Caco-2 (cell line): ENCODE measurements at regions of chr5 and their contacts with region 1.

Region 1: DNA sequence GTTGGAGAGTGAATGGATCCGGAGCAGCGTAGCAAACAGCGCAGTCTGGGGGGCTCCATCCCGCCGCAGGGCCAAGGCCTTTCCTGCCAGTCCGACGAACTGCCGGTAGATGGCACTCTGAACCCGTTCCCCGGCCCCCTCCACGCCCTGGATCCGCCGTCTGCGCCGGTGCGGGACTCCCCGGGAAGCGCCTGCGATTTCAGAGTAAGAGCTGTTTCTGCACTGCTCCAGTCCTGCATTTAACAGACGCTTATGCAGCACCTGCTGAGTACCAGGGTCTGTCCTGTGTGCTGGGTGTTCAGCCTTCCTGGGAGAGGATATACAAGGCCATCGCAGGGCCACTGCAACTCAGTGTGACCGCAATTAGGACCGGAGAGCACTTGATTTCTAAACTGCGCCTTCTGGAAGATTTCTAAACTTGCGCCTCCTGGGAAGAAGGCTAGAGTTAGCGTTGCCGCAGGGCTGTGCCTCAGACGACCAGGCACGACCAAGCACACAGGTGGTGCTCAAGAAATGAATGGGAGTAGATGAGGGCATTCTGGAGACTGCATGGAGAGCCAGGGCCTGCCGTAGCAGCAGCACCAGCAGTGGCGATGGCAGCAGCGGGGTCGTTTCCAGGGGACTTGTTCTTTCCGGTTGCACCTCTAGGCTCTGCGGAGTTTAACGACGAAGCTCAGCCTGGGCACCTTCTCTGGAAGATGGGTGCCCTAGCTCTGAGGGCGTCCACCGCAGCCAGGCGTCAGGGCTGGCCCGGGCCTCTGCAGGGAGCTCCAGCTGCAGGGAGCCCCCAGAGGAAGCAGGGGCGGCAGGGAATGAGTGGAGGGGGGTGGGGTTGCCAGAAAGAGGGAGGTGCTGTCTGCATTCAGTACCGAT is 14.3 kb upstream of the TIFAB start:
- DNase-seq: peak; percentile 77 to 84
- H3K4me3 ChIP-seq: no peak overlapping the region
- H3K4me3 Mint-ChIP-seq: no peak overlapping the region
- H3K27ac Mint-ChIP-seq: no peak overlapping the region
- H3K4me1 ChIP-seq: no peaks in the 10 kb centered on the region; the same call in 1 of the 2 replicates
- H3K4me1 Mint-ChIP-seq: peaks cover 6% of the 10 kb centered on the region
- H3K27me3 ChIP-seq: peaks cover 1% of the 10 kb centered on the region
- H3K27me3 Mint-ChIP-seq: peaks cover 18% of the 10 kb centered on the region
- CTCF ChIP-seq: peak; percentile 91 to 97

Region 2: DNA sequence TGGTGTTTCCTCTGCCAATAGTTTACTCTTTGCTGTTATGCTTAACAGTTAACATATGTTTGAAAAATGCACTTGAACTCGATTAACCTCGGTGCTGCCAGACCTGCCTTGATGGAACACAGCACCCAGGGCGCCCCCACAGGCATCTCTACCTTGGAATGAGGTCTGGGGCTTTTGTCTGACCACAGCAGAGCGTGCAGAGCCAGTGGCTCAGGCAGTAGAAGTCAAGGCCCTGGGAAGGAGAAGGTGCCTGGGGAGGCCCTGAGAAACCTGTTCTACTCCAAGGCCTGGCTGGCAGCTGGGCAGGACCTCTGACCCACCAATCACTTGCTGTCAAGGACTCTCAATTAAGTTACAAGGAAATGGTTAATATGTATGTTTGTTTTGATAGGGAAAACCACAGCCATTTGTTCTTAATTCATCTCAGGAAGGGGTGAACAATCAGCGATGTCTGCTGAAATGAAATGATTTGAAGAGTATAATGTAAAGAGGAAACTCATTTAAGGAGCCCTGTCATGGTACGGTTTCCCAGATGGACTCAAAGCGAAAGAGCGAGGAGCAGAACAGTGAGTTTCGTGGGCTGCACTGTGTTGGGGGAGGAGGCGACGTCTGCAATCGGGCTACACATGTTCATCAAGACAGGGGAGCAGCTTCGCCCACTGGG is 89.3 kb before region 1 on chr5:
- CTCF ChIA-PET with region 1: no interaction called
- POLR2A ChIA-PET with region 1: no interaction called
- intact Hi-C with region 1: no loop called
- DNase-seq: no peak
- H3K4me3 ChIP-seq: no peak overlapping the region
- H3K4me3 Mint-ChIP-seq: no peak overlapping the region
- H3K27ac Mint-ChIP-seq: no peak overlapping the region
- H3K4me1 ChIP-seq: peaks cover 12% of the 10 kb centered on the region; the same call in 1 of the 2 replicates
- H3K4me1 Mint-ChIP-seq: no peaks in the 10 kb centered on the region
- H3K27me3 ChIP-seq: no peaks in the 10 kb centered on the region
- H3K27me3 Mint-ChIP-seq: no peaks in the 10 kb centered on the region
- CTCF ChIP-seq: no peak

Region 3: DNA sequence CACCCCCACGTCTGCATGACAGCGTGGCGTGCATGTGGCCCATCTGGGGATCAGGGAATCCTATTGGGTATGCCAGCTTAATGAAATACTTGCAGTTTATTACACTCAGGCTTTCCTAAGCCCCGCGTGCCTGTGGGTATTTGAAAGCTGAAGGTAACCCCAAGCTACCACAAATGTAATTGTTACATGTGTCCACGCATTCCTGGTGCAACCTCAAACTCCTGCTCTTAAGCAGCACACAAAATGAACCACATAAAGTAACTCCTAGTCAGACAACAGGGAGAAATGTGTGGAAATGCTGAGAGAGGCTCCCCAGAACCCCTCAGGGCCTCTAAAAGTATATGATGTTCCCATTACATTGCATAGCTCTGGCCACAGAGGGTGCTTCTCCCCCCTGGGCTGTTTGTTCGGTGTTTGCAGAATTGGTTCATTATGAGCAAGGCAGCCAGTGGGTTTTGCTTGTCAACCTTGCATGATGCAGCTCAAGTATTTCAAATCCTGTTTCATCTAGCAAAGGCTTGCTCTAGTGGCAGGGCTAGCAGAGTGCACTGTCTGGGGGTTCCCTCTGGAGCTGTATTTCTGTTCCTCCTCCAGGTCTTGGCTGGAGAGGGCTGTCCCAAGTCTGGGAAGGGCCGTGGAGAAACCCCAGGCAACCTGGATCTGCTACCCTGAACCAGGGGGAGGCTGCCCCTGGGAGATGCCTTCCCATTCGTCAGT is 17.5 kb before region 1 on chr5:
- CTCF ChIA-PET with region 1: interaction called, 13 read pairs
- POLR2A ChIA-PET with region 1: no interaction called
- intact Hi-C with region 1: no loop called
- DNase-seq: no peak
- H3K4me3 ChIP-seq: no peak overlapping the region
- H3K4me3 Mint-ChIP-seq: no peak overlapping the region
- H3K27ac Mint-ChIP-seq: no peak overlapping the region
- H3K4me1 ChIP-seq: no peaks in the 10 kb centered on the region
- H3K4me1 Mint-ChIP-seq: no peaks in the 10 kb centered on the region
- H3K27me3 ChIP-seq: no peaks in the 10 kb centered on the region
- H3K27me3 Mint-ChIP-seq: peaks cover 2% of the 10 kb centered on the region
- CTCF ChIP-seq: no peak

Region 4: GRCh38 chr5:135488727-135489465 is 22.5 kb after region 1 on chr5:
- CTCF ChIA-PET with region 1: interaction called, 18 read pairs
- POLR2A ChIA-PET with region 1: no interaction called
- intact Hi-C with region 1: no loop called
- DNase-seq: peak; percentile 83
- H3K4me3 ChIP-seq: peak overlapping the region; percentile 34
- H3K4me3 Mint-ChIP-seq: peak overlapping the region; percentile 72
- H3K27ac Mint-ChIP-seq: peak overlapping the region; percentile 67
- H3K4me1 ChIP-seq: peaks cover 44% of the 10 kb centered on the region
- H3K4me1 Mint-ChIP-seq: peaks cover 30% of the 10 kb centered on the region
- H3K27me3 ChIP-seq: no peaks in the 10 kb centered on the region
- H3K27me3 Mint-ChIP-seq: no peaks in the 10 kb centered on the region
- CTCF ChIP-seq: no peak

Region 5: GRCh38 chr5:135551593-135552447 is 85.4 kb after region 1 on chr5:
- CTCF ChIA-PET with region 1: interaction called, 311 read pairs
- POLR2A ChIA-PET with region 1: no interaction called
- intact Hi-C with region 1: loop called (anchors 1 kb)
- DNase-seq: peak; percentile 78 to 82
- H3K4me3 ChIP-seq: no peak overlapping the region
- H3K4me3 Mint-ChIP-seq: no peak overlapping the region
- H3K27ac Mint-ChIP-seq: no peak overlapping the region
- H3K4me1 ChIP-seq: no peaks in the 10 kb centered on the region
- H3K4me1 Mint-ChIP-seq: peaks cover 6% of the 10 kb centered on the region
- H3K27me3 ChIP-seq: no peaks in the 10 kb centered on the region
- H3K27me3 Mint-ChIP-seq: peaks cover 10% of the 10 kb centered on the region
- CTCF ChIP-seq: peak; percentile 80 to 82

Region 6: DNA sequence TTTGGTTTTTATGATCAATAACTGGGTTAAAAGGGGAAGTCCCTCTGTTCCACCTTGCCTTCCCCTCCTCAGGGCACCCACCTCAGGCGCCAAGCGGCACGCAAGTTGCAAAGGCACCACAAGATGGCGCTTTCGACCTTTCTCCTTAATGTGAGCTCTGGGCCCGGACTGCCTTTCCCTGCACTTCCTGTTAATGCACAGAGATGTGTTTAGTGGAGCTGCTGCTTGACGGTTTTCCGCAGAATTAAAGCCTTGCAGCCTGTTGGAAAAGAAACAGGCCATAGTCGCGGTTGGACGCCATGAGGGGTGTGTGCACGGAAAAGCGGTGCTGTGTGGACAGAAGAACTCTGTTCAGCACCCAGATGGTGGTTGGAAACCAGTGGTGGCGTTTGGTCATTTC is 94.4 kb after region 1 on chr5:
- CTCF ChIA-PET with region 1: interaction called, 55 read pairs
- POLR2A ChIA-PET with region 1: no interaction called
- intact Hi-C with region 1: loop called (anchors 1 kb)
- DNase-seq: peak; percentile 83 to 86
- H3K4me3 ChIP-seq: no peak overlapping the region
- H3K4me3 Mint-ChIP-seq: peak overlapping the region; percentile 27
- H3K27ac Mint-ChIP-seq: no peak overlapping the region
- H3K4me1 ChIP-seq: no peaks in the 10 kb centered on the region; the same call in 1 of the 2 replicates
- H3K4me1 Mint-ChIP-seq: peaks cover 12% of the 10 kb centered on the region
- H3K27me3 ChIP-seq: no peaks in the 10 kb centered on the region
- H3K27me3 Mint-ChIP-seq: peaks cover 5% of the 10 kb centered on the region
- CTCF ChIP-seq: peak; percentile 87 to 92

Region 7: DNA sequence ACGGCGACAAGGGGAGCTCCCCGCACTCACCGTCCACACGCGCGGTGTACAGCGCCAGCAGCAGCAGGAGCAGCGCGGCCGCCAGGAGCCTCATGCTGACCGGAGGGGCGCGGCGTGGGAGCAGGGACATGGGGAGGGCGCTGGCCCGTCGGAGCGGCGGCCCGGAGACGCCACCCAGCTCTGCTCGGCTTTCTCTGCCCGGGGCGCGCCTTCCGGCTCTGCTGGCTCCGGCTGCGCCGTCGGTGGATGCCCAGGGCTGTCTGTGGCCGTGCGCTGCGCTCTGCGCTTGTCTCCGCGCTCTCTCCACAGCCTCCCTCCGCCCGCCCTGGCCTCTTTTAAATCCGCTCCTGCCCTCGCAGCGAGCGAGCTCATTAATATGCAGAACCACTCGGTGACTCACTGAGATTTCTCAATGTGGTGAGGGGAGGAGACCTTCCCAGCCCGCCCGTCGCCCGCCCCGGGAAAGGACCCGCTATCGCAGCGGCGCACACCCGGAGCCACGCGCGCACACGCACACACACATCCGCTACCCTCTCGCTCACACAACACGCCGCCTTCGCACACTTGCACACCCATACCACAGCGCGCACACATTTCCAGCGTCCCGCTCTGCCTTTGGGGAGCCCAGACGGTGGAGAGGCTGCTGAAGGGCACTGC is 112.4 kb after region 1 on chr5 and contains the start of gene CXCL14:
- CTCF ChIA-PET with region 1: no interaction called
- POLR2A ChIA-PET with region 1: no interaction called
- intact Hi-C with region 1: no loop called
- DNase-seq: no peak
- H3K4me3 ChIP-seq: no peak within 1 kb of the TSS
- H3K4me3 Mint-ChIP-seq: no peak within 1 kb of the TSS
- H3K27ac Mint-ChIP-seq: no peak within 1 kb of the TSS
- H3K4me1 ChIP-seq: no peaks in the 10 kb centered on the region
- H3K4me1 Mint-ChIP-seq: no peaks in the 10 kb centered on the region
- H3K27me3 ChIP-seq: no peaks in the 10 kb centered on the region
- H3K27me3 Mint-ChIP-seq: peaks cover 25% of the 10 kb centered on the region
- CTCF ChIP-seq: no peak
- total RNA-seq, gene CXCL14: not detected in 2 replicates

Region 8: GRCh38 chr5:135729321-135729786 is 262.9 kb after region 1 on chr5:
- CTCF ChIA-PET with region 1: no interaction called
- POLR2A ChIA-PET with region 1: no interaction called
- intact Hi-C with region 1: loop called (anchors 2 kb)
- DNase-seq: peak in 1 of 2 experiments; percentile 34
- H3K4me3 ChIP-seq: no peak overlapping the region
- H3K4me3 Mint-ChIP-seq: no peak overlapping the region
- H3K27ac Mint-ChIP-seq: no peak overlapping the region
- H3K4me1 ChIP-seq: no peaks in the 10 kb centered on the region
- H3K4me1 Mint-ChIP-seq: no peaks in the 10 kb centered on the region
- H3K27me3 ChIP-seq: no peaks in the 10 kb centered on the region
- H3K27me3 Mint-ChIP-seq: no peaks in the 10 kb centered on the region
- CTCF ChIP-seq: peak; percentile 37 to 59

Region 9: GRCh38 chr5:135829681-135830383 is 363.4 kb after region 1 on chr5:
- CTCF ChIA-PET with region 1: interaction called, 8 read pairs
- POLR2A ChIA-PET with region 1: no interaction called
- intact Hi-C with region 1: loop called (anchors 1 kb)
- DNase-seq: peak; percentile 63 to 75
- H3K4me3 ChIP-seq: no peak overlapping the region
- H3K4me3 Mint-ChIP-seq: no peak overlapping the region
- H3K27ac Mint-ChIP-seq: no peak overlapping the region
- H3K4me1 ChIP-seq: no peaks in the 10 kb centered on the region
- H3K4me1 Mint-ChIP-seq: peaks cover 7% of the 10 kb centered on the region
- H3K27me3 ChIP-seq: peaks cover 5% of the 10 kb centered on the region; the same call in 1 of the 2 replicates
- H3K27me3 Mint-ChIP-seq: peaks cover 39% of the 10 kb centered on the region
- CTCF ChIP-seq: peak; percentile 86 to 93